PC-3 (cell line): ENCODE measurements at regions of chr6 and their contacts with region 1.

Region 1: DNA sequence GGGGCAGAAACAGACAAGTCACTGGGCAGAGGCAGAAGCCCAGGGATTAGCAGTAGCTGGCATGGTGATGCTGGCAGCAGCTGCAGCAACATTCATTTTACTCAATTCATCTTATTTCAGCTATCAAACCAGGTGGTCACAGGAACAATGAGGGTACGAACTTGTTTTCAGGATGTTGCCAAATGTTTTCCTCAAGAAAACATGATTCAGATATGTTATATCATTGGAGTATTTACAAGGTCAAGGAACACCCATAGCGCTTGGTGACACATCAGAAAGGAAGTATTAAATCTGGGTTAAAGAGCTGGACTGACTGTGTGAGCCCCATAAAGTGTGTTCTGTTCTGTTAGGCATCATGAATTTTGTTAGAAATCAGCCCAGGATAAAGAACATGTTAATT is 456.9 kb upstream of the ID4 start:
- DNase-seq: peak; percentile 90
- ATAC-seq: peak; percentile 92
- H3K4me3 ChIP-seq: no peak overlapping the region
- H3K27ac ChIP-seq: peak overlapping the region; percentile 70
- H3K4me1 ChIP-seq: peaks cover 30% of the 10 kb centered on the region
- H3K27me3 ChIP-seq: no peaks in the 10 kb centered on the region
- CTCF ChIP-seq: no peak

Region 2: GRCh38 chr6:19415585-19416326 is 35.5 kb after region 1 on chr6:
- CTCF ChIA-PET with region 1: no interaction called
- POLR2A ChIA-PET with region 1: no interaction called
- intact Hi-C with region 1: loop called (anchors 1 kb)
- DNase-seq: peak; percentile 92
- ATAC-seq: peak; percentile 82
- H3K4me3 ChIP-seq: no peak overlapping the region
- H3K27ac ChIP-seq: peak overlapping the region; percentile 89
- H3K4me1 ChIP-seq: peaks cover 59% of the 10 kb centered on the region
- H3K27me3 ChIP-seq: no peaks in the 10 kb centered on the region
- CTCF ChIP-seq: no peak

Region 3: GRCh38 chr6:19432966-19433498 is 52.7 kb after region 1 on chr6:
- CTCF ChIA-PET with region 1: no interaction called
- POLR2A ChIA-PET with region 1: no interaction called
- intact Hi-C with region 1: no loop called
- DNase-seq: peak; percentile 68
- ATAC-seq: no peak
- H3K4me3 ChIP-seq: no peak overlapping the region
- H3K27ac ChIP-seq: no peak overlapping the region
- H3K4me1 ChIP-seq: peaks cover 11% of the 10 kb centered on the region
- H3K27me3 ChIP-seq: no peaks in the 10 kb centered on the region
- CTCF ChIP-seq: no peak

Region 4: DNA sequence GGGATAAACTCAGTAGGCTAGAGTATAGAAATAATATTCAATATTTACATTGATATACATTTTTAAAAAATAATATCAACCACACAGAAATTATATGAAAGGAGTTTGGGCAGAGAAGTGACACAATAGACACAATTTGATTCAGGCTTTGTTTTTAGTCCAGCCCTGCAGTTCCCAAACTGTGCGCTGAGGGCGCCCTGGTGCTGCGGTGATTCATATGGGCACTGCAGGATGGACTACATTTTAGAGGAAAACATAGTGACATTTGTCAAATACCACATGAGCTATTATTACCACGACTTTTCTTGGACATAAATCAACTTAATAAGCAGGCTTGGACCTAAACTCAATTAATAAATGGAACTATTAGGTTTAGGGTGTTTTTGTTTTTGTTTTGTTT is 92.6 kb after region 1 on chr6:
- CTCF ChIA-PET with region 1: no interaction called
- POLR2A ChIA-PET with region 1: no interaction called
- intact Hi-C with region 1: loop called (anchors 5 kb)
- DNase-seq: peak; percentile 49
- ATAC-seq: no peak
- H3K4me3 ChIP-seq: no peak overlapping the region
- H3K27ac ChIP-seq: peak overlapping the region; percentile 57; the same call in 1 of the 2 replicates
- H3K4me1 ChIP-seq: peaks cover 23% of the 10 kb centered on the region
- H3K27me3 ChIP-seq: no peaks in the 10 kb centered on the region
- CTCF ChIP-seq: peak; percentile 51

Region 5: DNA sequence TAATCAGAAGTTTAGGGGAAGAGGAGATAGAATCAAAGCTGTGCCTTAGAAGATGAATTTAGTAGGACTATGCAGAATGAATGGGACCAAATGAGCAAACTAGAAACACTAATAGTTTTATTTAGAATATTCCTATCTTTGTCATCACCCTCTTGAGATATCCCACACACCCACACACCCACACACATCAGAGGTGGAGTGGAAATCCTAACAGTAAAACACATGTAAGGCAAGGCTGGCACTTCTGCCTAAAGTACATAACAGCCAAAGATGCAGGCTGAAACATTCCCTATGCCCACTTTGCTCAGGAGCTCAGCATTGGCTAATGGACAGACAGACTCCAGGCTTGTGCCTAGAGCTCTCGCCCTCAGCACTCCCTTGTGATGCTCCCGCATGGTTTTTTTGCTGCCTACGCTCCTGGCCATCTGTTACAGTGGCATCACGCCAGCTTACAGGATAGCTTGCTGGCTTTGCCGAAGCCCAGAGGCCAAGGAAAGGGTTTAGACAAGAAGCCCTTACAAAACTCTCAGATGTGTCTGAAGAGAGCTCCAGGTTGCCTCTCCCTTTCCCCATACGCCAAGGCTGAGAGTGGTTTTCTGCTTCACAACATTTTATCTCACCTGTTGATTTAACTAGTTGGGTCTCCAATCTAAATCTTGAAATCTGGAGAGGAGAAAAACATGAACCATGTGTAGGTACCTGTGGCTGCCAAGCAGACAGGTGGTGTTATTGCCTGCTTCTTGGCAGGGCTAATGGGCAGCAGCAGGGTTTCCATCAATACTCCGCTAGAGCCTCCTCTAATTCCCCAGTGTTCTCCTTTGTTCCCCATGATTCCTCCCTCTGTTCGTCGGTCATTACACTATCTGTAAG is 174.3 kb after region 1 on chr6:
- CTCF ChIA-PET with region 1: no interaction called
- POLR2A ChIA-PET with region 1: no interaction called
- intact Hi-C with region 1: loop called (anchors 10 kb)
- DNase-seq: no peak
- ATAC-seq: no peak
- H3K4me3 ChIP-seq: no peak overlapping the region
- H3K27ac ChIP-seq: no peak overlapping the region
- H3K4me1 ChIP-seq: no peaks in the 10 kb centered on the region
- H3K27me3 ChIP-seq: no peaks in the 10 kb centered on the region
- CTCF ChIP-seq: no peak